AG04450 (cell line): ENCODE measurements at regions of chr14 and their contacts with region 1.

Region 1: GRCh38 chr14:64434528-64434927 is 30.8 kb upstream of the AKAP5 start:
- DNase-seq: no peak
- H3K4me3 ChIP-seq: no peak overlapping the region
- H3K27ac ChIP-seq: no peak overlapping the region
- H3K27me3 ChIP-seq: no peaks in the 10 kb centered on the region
- CTCF ChIP-seq: no peak

Region 2: DNA sequence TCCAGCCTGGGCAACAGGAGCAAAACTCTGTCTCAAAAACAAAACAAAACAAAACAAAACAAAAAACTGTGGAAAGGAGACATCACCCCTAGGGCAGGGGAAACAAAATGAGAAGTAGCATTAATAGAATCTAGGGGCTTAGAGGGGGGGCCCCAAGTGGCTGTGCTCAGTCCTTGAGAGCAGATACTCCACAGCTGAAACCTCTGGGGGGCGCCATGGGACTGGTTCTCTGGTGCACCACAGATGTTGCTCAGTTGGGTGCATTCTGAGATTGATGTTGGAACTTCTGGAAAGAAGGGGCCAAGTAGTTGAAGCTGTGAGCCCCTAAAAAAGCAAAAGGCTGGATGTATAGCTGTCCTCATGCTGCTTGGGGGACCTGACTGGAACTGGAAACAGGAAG is 593.5 kb before region 1 on chr14:
- CTCF ChIA-PET with region 1: no interaction called
- POLR2A ChIA-PET with region 1: no interaction called
- DNase-seq: no peak
- H3K4me3 ChIP-seq: no peak overlapping the region
- H3K27ac ChIP-seq: no peak overlapping the region
- H3K27me3 ChIP-seq: no peaks in the 10 kb centered on the region
- CTCF ChIP-seq: no peak

Region 3: DNA sequence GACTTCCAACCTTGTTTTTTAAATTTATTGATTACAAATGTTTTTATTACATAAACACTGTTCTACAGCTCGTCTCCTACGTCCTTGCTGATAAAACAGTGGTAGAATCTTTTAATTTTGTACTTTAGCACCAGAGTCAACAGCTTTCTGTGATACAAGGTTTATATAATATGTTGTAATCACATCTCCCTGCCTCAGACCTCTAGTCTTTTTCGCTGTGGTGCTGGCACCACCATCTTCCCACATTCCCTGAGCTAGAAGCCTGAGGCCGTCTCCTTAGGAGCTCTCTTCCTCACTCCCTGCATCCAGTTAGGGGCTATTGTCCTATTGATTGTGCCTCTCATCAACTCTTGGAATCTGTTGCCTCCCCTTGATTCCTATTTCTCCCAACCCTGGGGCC is 29.2 kb before region 1 on chr14:
- CTCF ChIA-PET with region 1: interaction called, 10 read pairs
- POLR2A ChIA-PET with region 1: no interaction called
- DNase-seq: no peak
- H3K4me3 ChIP-seq: no peak overlapping the region
- H3K27ac ChIP-seq: no peak overlapping the region
- H3K27me3 ChIP-seq: no peaks in the 10 kb centered on the region
- CTCF ChIP-seq: no peak

Region 4: DNA sequence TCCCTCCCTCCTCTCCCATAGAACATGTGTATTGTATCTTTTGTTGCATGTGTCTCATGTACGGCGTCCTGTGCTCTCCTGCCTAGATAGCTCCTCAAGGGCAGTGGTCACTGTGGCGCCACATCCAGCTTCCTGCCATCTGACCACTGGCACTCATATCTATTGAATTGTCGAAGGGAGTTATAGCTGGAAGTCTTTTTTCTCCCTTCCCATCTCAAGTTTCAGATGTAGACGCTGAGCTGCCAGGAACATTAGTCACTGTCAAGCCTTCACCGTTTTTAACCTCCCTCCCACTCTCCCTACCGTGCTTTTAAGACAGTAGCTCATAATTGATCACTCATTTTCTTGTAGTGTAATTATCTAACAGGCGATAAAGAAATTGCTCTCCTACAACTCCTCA is 13.4 kb before region 1 on chr14:
- CTCF ChIA-PET with region 1: interaction called, 16 read pairs
- POLR2A ChIA-PET with region 1: interaction called, 4 read pairs
- DNase-seq: no peak
- H3K4me3 ChIP-seq: no peak overlapping the region
- H3K27ac ChIP-seq: no peak overlapping the region
- H3K27me3 ChIP-seq: no peaks in the 10 kb centered on the region
- CTCF ChIP-seq: no peak

Region 5: GRCh38 chr14:64444984-64445845 is 10.7 kb after region 1 on chr14:
- CTCF ChIA-PET with region 1: interaction called, 17 read pairs
- POLR2A ChIA-PET with region 1: no interaction called
- DNase-seq: peak; percentile 42
- H3K4me3 ChIP-seq: no peak overlapping the region
- H3K27ac ChIP-seq: peak overlapping the region; percentile 80
- H3K27me3 ChIP-seq: no peaks in the 10 kb centered on the region
- CTCF ChIP-seq: no peak

Region 6: GRCh38 chr14:64465191-64465822 is 30.8 kb after region 1 on chr14 and contains the start of gene AKAP5:
- CTCF ChIA-PET with region 1: interaction called, 14 read pairs
- POLR2A ChIA-PET with region 1: no interaction called
- DNase-seq: no peak
- H3K4me3 ChIP-seq: peak within 1 kb of the TSS; percentile 76
- H3K27ac ChIP-seq: no peak within 1 kb of the TSS
- H3K27me3 ChIP-seq: no peaks in the 10 kb centered on the region
- CTCF ChIP-seq: no peak
- polyA plus RNA-seq, gene AKAP5: 0.58 and 0.77 TPM in 2 replicates

Region 7: GRCh38 chr14:64478634-64479250 is 44.2 kb after region 1 on chr14:
- CTCF ChIA-PET with region 1: interaction called, 34 read pairs
- POLR2A ChIA-PET with region 1: no interaction called
- DNase-seq: no peak
- H3K4me3 ChIP-seq: no peak overlapping the region
- H3K27ac ChIP-seq: no peak overlapping the region
- H3K27me3 ChIP-seq: no peaks in the 10 kb centered on the region
- CTCF ChIP-seq: peak; percentile 47